ENCODE measurements at regions of chr7 and their contacts with region 1.

Region 1: DNA sequence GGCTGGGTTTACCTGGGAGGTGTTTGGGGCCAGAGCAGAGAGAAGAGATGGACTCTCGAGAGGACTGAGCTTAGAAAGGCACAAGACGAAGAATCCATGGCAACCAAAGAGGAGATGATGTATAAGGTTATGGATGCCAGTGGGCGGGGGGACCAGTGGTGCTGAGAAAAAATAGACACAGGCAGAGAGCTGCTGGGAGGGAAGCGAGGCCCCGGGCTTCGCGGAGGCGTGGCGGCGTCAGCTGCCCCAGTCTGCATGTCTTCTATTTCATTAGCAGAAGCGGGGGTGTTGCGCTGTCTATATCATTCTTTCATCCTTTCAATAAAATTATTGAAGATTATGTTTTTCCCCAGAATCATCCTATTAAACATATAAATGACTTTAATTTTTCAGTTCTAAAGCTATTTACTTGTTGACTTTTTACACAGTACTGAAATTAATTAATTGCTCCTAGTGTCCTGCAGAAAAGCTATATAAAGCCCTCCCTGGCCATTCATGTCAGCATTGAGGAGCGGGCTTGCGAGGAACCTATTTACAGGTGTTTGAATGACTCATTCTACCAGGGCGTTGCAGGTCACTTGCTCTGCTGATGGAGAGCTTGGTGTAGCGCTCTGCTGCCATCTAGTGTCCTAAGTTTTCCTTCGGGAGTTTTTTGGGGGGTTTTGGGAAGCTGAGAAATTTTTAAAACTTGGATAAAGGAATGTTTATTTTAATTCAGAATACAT is 42.9 kb upstream of the BHLHA15 start:
- ATAC-seq: peak; percentile 15 to 81 (median 69)
- H3K4me3 ChIP-seq: no peak overlapping the region
- H3K27ac ChIP-seq: no peak overlapping the region
- H3K4me1 ChIP-seq: peaks cover 6 to 13% of the 10 kb centered on the region in 2 donors

Region 2: GRCh38 chr7:97272237-97272975 is 895.9 kb before region 1 on chr7:
- in situ Hi-C with region 1: no loop called
- ATAC-seq: no peak
- H3K4me3 ChIP-seq: no peak overlapping the region
- H3K27ac ChIP-seq: no peak overlapping the region
- H3K4me1 ChIP-seq: peaks cover 0 to 4% of the 10 kb centered on the region in 2 donors

Region 3: GRCh38 chr7:98021588-98022351 is 146.6 kb before region 1 on chr7:
- in situ Hi-C with region 1: loop called in 4 of 9 experiments (anchors 10 to 25 kb)
- ATAC-seq: peak; percentile 66 to 99 (median 84)
- H3K4me3 ChIP-seq: no peak overlapping the region
- H3K27ac ChIP-seq: no peak overlapping the region
- H3K4me1 ChIP-seq: no peaks in the 10 kb centered on the region

Region 4: DNA sequence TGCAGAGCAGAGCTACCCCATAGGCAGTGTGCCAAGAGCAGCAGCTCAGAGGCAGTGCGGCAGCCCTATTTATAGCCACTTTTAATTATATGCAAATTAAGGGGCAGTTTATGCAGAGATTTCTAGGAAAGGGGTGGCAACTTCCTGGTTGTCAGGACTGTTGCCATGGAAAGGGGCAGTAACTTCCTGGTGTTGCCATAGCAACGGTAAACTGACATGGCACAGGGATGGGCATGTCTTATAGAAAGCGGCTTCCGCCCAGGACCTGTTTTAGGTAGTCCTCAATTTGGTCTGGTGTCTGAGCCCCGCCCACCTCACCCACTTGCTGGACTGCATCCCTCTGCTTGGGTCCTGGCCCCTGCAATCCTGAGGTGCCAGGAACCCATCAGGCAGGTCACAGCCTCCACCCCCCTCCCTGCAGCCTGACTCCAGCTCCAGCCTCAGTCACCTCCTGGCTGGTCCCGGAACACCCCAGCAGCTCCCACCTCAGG is 585.7 kb after region 1 on chr7:
- in situ Hi-C with region 1: no loop called
- ATAC-seq: peak; percentile 65 to 96 (median 90)
- H3K4me3 ChIP-seq: no peak overlapping the region
- H3K27ac ChIP-seq: peak overlapping the region in 1 of 2 donors; percentile 19
- H3K4me1 ChIP-seq: peaks cover 13 to 22% of the 10 kb centered on the region in 2 donors

Measured in motor neuron (in vitro differentiated cells).